Caco-2 (cell line): ENCODE measurements at regions of chr13 and their contacts with region 1.

Region 1: GRCh38 chr13:100721885-100722512 is 47.4 kb upstream of the TMTC4 start:
- DNase-seq: peak; percentile 67 to 75
- H3K4me3 ChIP-seq: no peak overlapping the region
- H3K4me3 Mint-ChIP-seq: no peak overlapping the region
- H3K27ac Mint-ChIP-seq: no peak overlapping the region
- H3K4me1 ChIP-seq: peaks cover 11% of the 10 kb centered on the region; the same call in 1 of the 2 replicates
- H3K4me1 Mint-ChIP-seq: peaks cover 17% of the 10 kb centered on the region
- H3K27me3 ChIP-seq: no peaks in the 10 kb centered on the region
- H3K27me3 Mint-ChIP-seq: no peaks in the 10 kb centered on the region
- CTCF ChIP-seq: peak; percentile 69 to 75

Region 2: DNA sequence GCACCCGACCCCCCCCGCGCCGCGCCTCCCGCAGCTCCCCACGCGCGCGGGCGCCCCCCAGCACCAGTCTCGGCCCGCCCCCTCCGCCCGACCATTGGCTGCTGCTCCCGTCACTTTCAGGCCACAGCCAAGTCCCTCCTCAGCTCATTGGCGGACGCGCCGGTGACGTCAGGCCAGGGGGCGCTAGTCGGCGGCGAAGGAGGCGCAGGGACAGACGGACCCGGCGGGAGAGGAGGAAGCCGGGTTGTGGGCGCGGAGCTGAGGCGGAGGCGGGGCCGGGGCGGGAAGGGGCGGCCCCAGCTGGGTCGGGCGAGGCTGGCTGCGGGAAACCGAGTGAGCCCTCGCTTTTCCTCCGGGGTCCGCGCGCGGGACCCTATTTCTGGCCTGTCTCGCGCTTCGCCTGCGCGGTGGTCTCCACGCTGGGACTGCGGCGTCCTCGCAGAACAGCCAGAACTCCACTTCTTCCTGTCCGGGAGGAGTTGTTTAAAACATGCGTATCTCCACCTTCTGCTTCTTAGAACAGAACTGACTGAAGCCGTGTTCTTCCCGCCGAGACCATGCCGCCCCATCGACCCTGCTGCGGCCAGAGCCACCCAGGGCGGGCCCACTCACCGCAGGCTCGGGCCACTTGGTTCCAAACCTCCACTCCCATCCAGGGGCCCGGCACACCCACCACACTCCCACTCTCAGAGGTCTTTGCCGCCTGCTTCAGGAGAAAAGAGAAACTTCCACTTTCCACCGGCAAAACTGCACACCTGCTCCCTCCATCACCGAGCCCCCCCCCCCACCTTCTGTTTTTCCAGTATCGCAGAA is 46.9 kb before region 1 on chr13:
- CTCF ChIA-PET with region 1: interaction called, 3 read pairs
- POLR2A ChIA-PET with region 1: no interaction called
- intact Hi-C with region 1: loop called (anchors 2 kb)
- DNase-seq: peak; percentile 100
- H3K4me3 ChIP-seq: peak overlapping the region; percentile 73
- H3K4me3 Mint-ChIP-seq: peak overlapping the region; percentile 96
- H3K27ac Mint-ChIP-seq: peak overlapping the region; percentile 15
- H3K4me1 ChIP-seq: peaks cover 15% of the 10 kb centered on the region
- H3K4me1 Mint-ChIP-seq: peaks cover 17% of the 10 kb centered on the region
- H3K27me3 ChIP-seq: no peaks in the 10 kb centered on the region
- H3K27me3 Mint-ChIP-seq: no peaks in the 10 kb centered on the region
- CTCF ChIP-seq: peak; percentile 42 to 59

Region 3: GRCh38 chr13:100828226-100828625 is 106.2 kb after region 1 on chr13:
- CTCF ChIA-PET with region 1: interaction called, 9 read pairs
- POLR2A ChIA-PET with region 1: no interaction called
- intact Hi-C with region 1: loop called (anchors 1 kb)
- DNase-seq: peak; percentile 23 to 41
- H3K4me3 ChIP-seq: no peak overlapping the region
- H3K4me3 Mint-ChIP-seq: no peak overlapping the region
- H3K27ac Mint-ChIP-seq: no peak overlapping the region
- H3K4me1 ChIP-seq: no peaks in the 10 kb centered on the region
- H3K4me1 Mint-ChIP-seq: peaks cover 7% of the 10 kb centered on the region
- H3K27me3 ChIP-seq: no peaks in the 10 kb centered on the region
- H3K27me3 Mint-ChIP-seq: no peaks in the 10 kb centered on the region
- CTCF ChIP-seq: peak; percentile 30 to 57

Region 4: GRCh38 chr13:100987953-100988352 is 266.0 kb after region 1 on chr13:
- CTCF ChIA-PET with region 1: no interaction called
- POLR2A ChIA-PET with region 1: no interaction called
- intact Hi-C with region 1: loop called (anchors 2 kb)
- DNase-seq: peak in 1 of 2 experiments; percentile 12
- H3K4me3 ChIP-seq: no peak overlapping the region
- H3K4me3 Mint-ChIP-seq: no peak overlapping the region
- H3K27ac Mint-ChIP-seq: no peak overlapping the region
- H3K4me1 ChIP-seq: no peaks in the 10 kb centered on the region
- H3K4me1 Mint-ChIP-seq: no peaks in the 10 kb centered on the region
- H3K27me3 ChIP-seq: no peaks in the 10 kb centered on the region
- H3K27me3 Mint-ChIP-seq: no peaks in the 10 kb centered on the region
- CTCF ChIP-seq: peak in 1 of 2 experiments; percentile 4

Region 5: GRCh38 chr13:101127741-101128353 is 405.8 kb after region 1 on chr13:
- CTCF ChIA-PET with region 1: no interaction called
- POLR2A ChIA-PET with region 1: no interaction called
- intact Hi-C with region 1: loop called (anchors 5 kb)
- DNase-seq: peak in 1 of 2 experiments; percentile 23
- H3K4me3 ChIP-seq: no peak overlapping the region
- H3K4me3 Mint-ChIP-seq: no peak overlapping the region
- H3K27ac Mint-ChIP-seq: no peak overlapping the region
- H3K4me1 ChIP-seq: no peaks in the 10 kb centered on the region
- H3K4me1 Mint-ChIP-seq: no peaks in the 10 kb centered on the region
- H3K27me3 ChIP-seq: no peaks in the 10 kb centered on the region; the same call in 1 of the 2 replicates
- H3K27me3 Mint-ChIP-seq: peaks cover 19% of the 10 kb centered on the region
- CTCF ChIP-seq: peak; percentile 56 to 85